ENCODE measurements at regions of chr2 and their contacts with region 1.

Region 1: GRCh38 chr2:96687720-96688593 is 45.4 kb downstream of the FER1L5 start:
- DNase-seq: no peak
- H3K4me3 ChIP-seq: no peak overlapping the region
- H3K27ac ChIP-seq: no peak overlapping the region
- H3K4me1 ChIP-seq: no peaks in the 10 kb centered on the region
- H3K27me3 ChIP-seq: peaks cover 0 to 4% of the 10 kb centered on the region in 2 experiments
- CTCF ChIP-seq: no peak
- POLR2A ChIP-seq: no peak

Region 2: GRCh38 chr2:96602330-96602823 is 85.6 kb before region 1 on chr2:
- CTCF ChIA-PET with region 1: no interaction called
- POLR2A ChIA-PET with region 1: no interaction called
- dilution Hi-C with region 1: no loop called
- intact Hi-C with region 1: no loop called
- DNase-seq: no peak
- H3K4me3 ChIP-seq: no peak overlapping the region
- H3K27ac ChIP-seq: no peak overlapping the region
- H3K4me1 ChIP-seq: no peaks in the 10 kb centered on the region
- H3K27me3 ChIP-seq: no peaks in the 10 kb centered on the region
- CTCF ChIP-seq: no peak
- POLR2A ChIP-seq: no peak

Region 3: GRCh38 chr2:96783388-96783787 is 95.4 kb after region 1 on chr2:
- CTCF ChIA-PET with region 1: no interaction called
- POLR2A ChIA-PET with region 1: interaction called, 10 read pairs
- dilution Hi-C with region 1: no loop called
- intact Hi-C with region 1: no loop called
- DNase-seq: no peak
- H3K4me3 ChIP-seq: no peak overlapping the region
- H3K27ac ChIP-seq: no peak overlapping the region
- H3K4me1 ChIP-seq: peaks cover 9% of the 10 kb centered on the region
- H3K27me3 ChIP-seq: no peaks in the 10 kb centered on the region
- CTCF ChIP-seq: no peak
- POLR2A ChIP-seq: no peak